Ovary (tissue), 10 donors: ENCODE measurements at regions of chr1 and their contacts with region 1.

Region 1: DNA sequence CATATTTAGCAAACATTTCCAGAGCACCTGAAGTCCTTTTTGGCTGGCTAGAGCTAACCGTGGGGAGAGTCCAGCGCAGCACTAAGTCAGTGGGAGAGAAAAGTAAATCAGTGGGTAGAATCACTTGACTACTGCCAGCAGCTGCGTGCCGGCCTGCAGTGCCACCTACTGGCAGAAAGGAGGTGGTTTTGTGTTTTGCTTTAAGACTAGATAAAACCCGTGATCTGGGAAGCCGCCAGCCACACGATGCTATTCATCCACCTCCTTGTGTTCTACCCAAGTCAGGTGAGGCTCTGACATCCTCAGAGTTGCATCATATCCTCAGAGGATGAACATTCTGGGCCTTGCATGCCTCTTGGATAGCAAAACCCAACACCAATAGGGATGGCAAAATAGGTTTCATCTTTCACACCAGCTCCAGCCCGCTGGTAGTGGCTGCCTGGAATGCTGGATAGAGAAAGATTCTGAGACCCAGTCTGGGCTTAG is 14.1 kb upstream of the HEYL start:
- DNase-seq: peak; percentile 79 to 89 (median 80)
- H3K4me3 ChIP-seq: no peak overlapping the region
- H3K27ac ChIP-seq: no peak overlapping the region
- H3K4me1 ChIP-seq: peaks cover 2% of the 10 kb centered on the region
- H3K27me3 ChIP-seq: no peaks in the 10 kb centered on the region
- CTCF ChIP-seq: peak; percentile 87 to 93 (median 91)
- EP300 ChIP-seq: no peak
- POLR2A ChIP-seq: no peak

Region 2: GRCh38 chr1:39625462-39626273 is 27.9 kb before region 1 on chr1:
- intact Hi-C with region 1: loop called in 1 of 4 experiments (anchors 2 kb)
- DNase-seq: peak; percentile 71 to 90 (median 85)
- H3K4me3 ChIP-seq: no peak overlapping the region
- H3K27ac ChIP-seq: peak overlapping the region in 1 of 2 donors; percentile 33
- H3K4me1 ChIP-seq: peaks cover 8% of the 10 kb centered on the region
- H3K27me3 ChIP-seq: no peaks in the 10 kb centered on the region
- CTCF ChIP-seq: no peak
- EP300 ChIP-seq: peak; percentile 73
- POLR2A ChIP-seq: no peak

Region 3: DNA sequence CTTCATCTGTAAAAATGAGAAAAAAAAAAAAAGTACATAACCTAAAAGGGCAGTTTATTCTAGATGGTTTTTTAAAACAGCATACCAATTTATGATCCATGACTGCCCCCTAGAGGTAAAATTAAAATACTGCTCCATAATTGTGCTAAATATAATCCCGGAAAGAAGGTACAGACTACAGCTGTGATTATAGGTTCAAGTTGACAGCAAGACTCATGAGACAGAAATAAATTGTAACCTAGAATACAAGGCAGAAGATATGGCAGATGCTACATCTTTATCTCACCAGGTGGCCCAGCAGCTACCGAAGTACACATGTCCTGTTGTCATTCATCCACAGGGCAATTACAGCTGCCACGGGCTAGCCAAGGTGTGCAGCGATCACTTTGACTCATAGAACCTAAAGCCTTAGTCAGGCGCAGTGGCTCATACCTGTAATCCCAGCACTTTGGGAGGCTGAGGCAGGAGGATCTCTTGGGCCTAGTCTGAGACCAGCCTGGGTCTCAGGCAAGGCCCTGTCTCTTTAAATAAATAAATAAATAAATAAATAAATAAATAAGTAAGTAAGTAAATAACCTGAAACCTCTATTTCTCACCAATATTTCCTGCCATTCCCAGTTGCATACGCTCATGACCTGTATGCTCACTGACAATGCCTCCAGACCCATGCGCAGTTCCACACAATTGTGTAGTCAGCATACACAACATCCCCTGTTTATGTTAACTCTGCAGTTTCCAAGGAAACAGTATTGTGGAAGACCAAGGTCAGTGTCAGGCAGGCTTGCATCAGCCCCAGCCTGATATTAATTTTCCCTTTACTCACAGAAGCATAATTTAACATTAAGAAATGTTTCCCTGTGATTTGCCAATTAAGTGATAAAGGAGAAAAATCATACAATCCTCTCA is 66.8 kb after region 1 on chr1:
- intact Hi-C with region 1: loop called in 1 of 4 experiments (anchors 5 kb)
- DNase-seq: no peak
- H3K4me3 ChIP-seq: no peak overlapping the region
- H3K27ac ChIP-seq: no peak overlapping the region
- H3K4me1 ChIP-seq: no peaks in the 10 kb centered on the region
- H3K27me3 ChIP-seq: no peaks in the 10 kb centered on the region
- CTCF ChIP-seq: peak; percentile 70 to 79 (median 72)
- EP300 ChIP-seq: no peak
- POLR2A ChIP-seq: no peak

Region 4: GRCh38 chr1:40017951-40018575 is 364.5 kb after region 1 on chr1:
- intact Hi-C with region 1: no loop called
- DNase-seq: no peak
- H3K4me3 ChIP-seq: no peak overlapping the region
- H3K27ac ChIP-seq: no peak overlapping the region
- H3K4me1 ChIP-seq: no peaks in the 10 kb centered on the region
- H3K27me3 ChIP-seq: no peaks in the 10 kb centered on the region
- CTCF ChIP-seq: no peak
- EP300 ChIP-seq: no peak
- POLR2A ChIP-seq: no peak